ENCODE measurements at regions of chr1 and their contacts with region 1.

Region 1: DNA sequence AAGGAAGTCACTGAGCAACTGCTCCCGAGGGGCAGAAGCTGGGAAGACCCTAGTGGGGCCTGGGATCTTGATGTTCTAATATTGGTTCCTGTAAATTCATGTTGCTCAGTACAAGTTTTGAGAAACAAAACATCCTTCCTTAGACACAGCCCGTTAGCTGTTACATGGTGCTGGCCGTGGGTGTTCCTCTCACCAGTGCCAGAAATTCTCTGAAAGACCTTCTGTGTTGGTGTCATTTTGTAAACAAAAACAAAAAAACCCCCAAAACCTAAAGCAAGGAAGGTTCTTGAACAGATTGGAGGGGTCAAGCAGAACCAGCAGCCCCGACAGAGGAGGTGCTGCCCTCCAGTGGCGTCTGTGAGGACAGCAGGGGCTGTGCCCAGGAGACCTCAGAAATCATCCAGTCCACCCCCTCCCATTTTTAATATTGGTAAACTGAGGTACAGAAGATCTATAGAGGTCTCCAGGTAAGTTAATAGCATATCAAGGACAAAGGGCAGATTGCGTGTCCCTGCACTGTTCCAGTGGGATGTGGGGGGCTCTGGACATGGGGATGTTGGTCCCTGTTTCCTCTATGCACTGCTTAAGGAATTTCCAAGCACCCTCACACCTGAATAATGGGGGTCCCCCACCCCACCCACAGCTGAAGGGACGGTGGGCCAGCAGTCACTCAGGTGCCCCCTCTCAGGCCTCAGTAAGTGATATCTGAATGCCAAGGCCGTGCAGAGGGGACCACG is 38.2 kb downstream of the SLC2A7 start:
- DNase-seq: peak; percentile 76
- H3K4me3 Mint-ChIP-seq: peak overlapping the region; percentile 7
- H3K27ac Mint-ChIP-seq: peak overlapping the region; percentile 72
- H3K4me1 Mint-ChIP-seq: peaks cover 56% of the 10 kb centered on the region
- H3K27me3 Mint-ChIP-seq: peaks cover 5% of the 10 kb centered on the region

Region 2: GRCh38 chr1:8911416-8911815 is 76.6 kb before region 1 on chr1:
- CTCF ChIA-PET with region 1: interaction called, 118 read pairs
- POLR2A ChIA-PET with region 1: interaction called, 7 read pairs
- DNase-seq: no peak
- H3K4me3 Mint-ChIP-seq: no peak overlapping the region
- H3K27ac Mint-ChIP-seq: no peak overlapping the region
- H3K4me1 Mint-ChIP-seq: peaks cover 16% of the 10 kb centered on the region
- H3K27me3 Mint-ChIP-seq: peaks cover 17% of the 10 kb centered on the region

Region 3: GRCh38 chr1:8941906-8942305 is 46.1 kb before region 1 on chr1:
- CTCF ChIA-PET with region 1: interaction called, 15 read pairs
- POLR2A ChIA-PET with region 1: interaction called, 13 read pairs
- DNase-seq: no peak
- H3K4me3 Mint-ChIP-seq: no peak overlapping the region
- H3K27ac Mint-ChIP-seq: peak overlapping the region; percentile 34
- H3K4me1 Mint-ChIP-seq: peaks cover 88% of the 10 kb centered on the region
- H3K27me3 Mint-ChIP-seq: no peaks in the 10 kb centered on the region

Region 4: DNA sequence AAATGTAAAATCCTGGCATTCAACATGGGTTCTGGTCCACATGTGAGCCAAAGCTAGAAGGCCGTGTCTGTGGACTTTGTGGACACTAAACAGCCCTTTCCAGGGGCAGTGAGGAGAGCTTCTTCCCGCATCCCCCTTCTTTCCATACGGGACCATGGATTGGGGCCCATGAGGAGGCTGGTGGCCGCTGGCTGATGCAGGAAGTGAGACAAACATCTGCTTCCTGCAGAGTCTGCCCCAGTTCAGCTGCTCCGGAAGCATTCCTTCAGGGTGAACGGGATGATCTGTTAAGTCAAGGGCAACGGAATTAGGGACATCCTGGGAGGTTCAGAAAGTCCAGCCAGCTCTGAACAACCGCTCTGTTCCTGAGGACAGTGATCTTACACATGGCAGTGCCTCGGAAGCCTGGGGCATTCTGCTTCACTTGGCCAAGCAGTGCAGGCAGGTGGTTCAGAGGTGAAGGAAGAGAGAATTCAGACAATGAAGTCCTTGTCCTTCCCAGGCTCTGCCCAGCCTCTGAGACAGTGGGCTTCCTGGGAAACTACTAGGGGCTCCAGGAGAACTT is 40.8 kb before region 1 on chr1:
- CTCF ChIA-PET with region 1: interaction called, 15 read pairs
- POLR2A ChIA-PET with region 1: interaction called, 13 read pairs
- DNase-seq: peak; percentile 37
- H3K4me3 Mint-ChIP-seq: no peak overlapping the region
- H3K27ac Mint-ChIP-seq: peak overlapping the region; percentile 99
- H3K4me1 Mint-ChIP-seq: peaks cover 84% of the 10 kb centered on the region
- H3K27me3 Mint-ChIP-seq: no peaks in the 10 kb centered on the region

Region 5: GRCh38 chr1:8962812-8963530 is 25.1 kb before region 1 on chr1:
- CTCF ChIA-PET with region 1: interaction called, 36 read pairs
- POLR2A ChIA-PET with region 1: interaction called, 5 read pairs
- DNase-seq: peak; percentile 56
- H3K4me3 Mint-ChIP-seq: no peak overlapping the region
- H3K27ac Mint-ChIP-seq: peak overlapping the region; percentile 54
- H3K4me1 Mint-ChIP-seq: peaks cover 71% of the 10 kb centered on the region
- H3K27me3 Mint-ChIP-seq: no peaks in the 10 kb centered on the region

Region 6: GRCh38 chr1:8970870-8971337 is 17.1 kb before region 1 on chr1:
- CTCF ChIA-PET with region 1: interaction called, 19 read pairs
- POLR2A ChIA-PET with region 1: interaction called, 10 read pairs
- DNase-seq: peak; percentile 57
- H3K4me3 Mint-ChIP-seq: peak overlapping the region; percentile 98
- H3K27ac Mint-ChIP-seq: peak overlapping the region; percentile 99
- H3K4me1 Mint-ChIP-seq: peaks cover 56% of the 10 kb centered on the region
- H3K27me3 Mint-ChIP-seq: no peaks in the 10 kb centered on the region